ENCODE measurements at regions of chr20 and their contacts with region 1.

Region 1: GRCh38 chr20:43983359-43983758 is 68.7 kb downstream of the TOX2 start:
- DNase-seq: peak in 1 of 2 experiments; percentile 27
- ATAC-seq: peak in 1 of 2 experiments; percentile 33; a peak in 3 of 6 replicates
- H3K4me3 ChIP-seq: no peak overlapping the region
- H3K27ac ChIP-seq: peak overlapping the region in 1 of 2 experiments; percentile 63; a peak in 1 of 6 replicates
- H3K4me1 ChIP-seq: peaks cover 5% of the 10 kb centered on the region; the same call in 1 of the 3 replicates
- CTCF ChIP-seq: peak; percentile 30
- EP300 ChIP-seq: no peak
- POLR2A ChIP-seq: no peak
- RAD21 ChIP-seq: peak in 1 of 2 experiments; percentile 30; a peak in 2 of 5 replicates

Region 2: DNA sequence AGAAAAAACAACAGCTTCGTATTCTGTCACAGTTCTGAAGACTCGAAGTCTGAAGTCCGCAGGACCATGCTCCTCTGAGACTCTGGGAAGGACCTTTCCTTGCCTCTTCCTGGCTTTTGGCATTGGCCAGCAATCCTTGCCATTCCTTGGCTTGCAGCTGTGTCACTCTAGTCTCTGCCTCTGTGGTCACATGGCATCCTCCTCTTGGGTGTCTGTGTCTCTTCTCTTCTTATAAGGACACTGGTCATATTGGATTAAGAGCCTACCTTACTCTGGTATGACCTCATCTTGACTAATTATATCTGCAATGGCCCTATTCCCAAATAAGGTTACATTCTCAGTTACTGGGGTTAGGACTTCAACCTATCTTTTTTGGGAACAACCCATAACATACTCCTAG is 206.7 kb before region 1 on chr20:
- CTCF ChIA-PET with region 1: no interaction called
- POLR2A ChIA-PET with region 1: no interaction called
- DNase-seq: no peak
- ATAC-seq: no peak
- H3K4me3 ChIP-seq: no peak overlapping the region
- H3K27ac ChIP-seq: no peak overlapping the region
- H3K4me1 ChIP-seq: no peaks in the 10 kb centered on the region
- CTCF ChIP-seq: no peak
- EP300 ChIP-seq: no peak
- POLR2A ChIP-seq: no peak
- RAD21 ChIP-seq: no peak

Region 3: DNA sequence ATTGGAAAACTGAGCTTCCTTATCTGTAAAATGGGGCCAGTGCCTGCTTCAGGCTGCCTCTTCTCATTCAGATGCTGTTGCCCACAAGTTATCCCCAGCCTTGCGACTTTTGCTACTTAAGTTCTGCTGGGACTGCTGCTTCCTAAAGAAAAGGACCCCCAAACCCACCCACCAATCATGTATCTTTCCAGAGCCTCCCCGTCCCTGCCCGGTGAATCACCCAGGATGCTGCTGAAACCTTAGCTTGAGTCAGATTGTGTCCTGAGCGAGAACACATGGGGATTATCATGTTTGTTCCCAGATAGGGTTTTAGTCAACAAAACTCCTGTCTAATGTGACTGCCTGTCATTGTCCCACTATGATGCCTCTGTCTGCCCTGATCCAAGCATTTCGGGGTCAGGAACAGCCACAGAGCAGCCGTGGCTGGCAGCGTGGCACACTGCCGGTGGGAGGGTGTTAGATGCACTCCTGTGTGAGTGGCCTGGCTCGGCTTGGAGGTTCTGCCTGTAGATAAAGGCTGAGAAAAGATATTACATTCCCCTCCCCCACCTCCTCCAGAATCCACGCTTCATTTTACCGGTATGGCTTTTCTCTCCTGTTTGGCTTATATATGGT is 11.2 kb after region 1 on chr20:
- CTCF ChIA-PET with region 1: interaction called, 13 read pairs
- POLR2A ChIA-PET with region 1: no interaction called
- DNase-seq: no peak
- ATAC-seq: no peak
- H3K4me3 ChIP-seq: no peak overlapping the region
- H3K27ac ChIP-seq: no peak overlapping the region
- H3K4me1 ChIP-seq: no peaks in the 10 kb centered on the region
- CTCF ChIP-seq: no peak
- EP300 ChIP-seq: no peak
- POLR2A ChIP-seq: no peak
- RAD21 ChIP-seq: no peak

Region 4: GRCh38 chr20:44092551-44093248 is 109.3 kb after region 1 on chr20:
- CTCF ChIA-PET with region 1: no interaction called
- POLR2A ChIA-PET with region 1: no interaction called
- DNase-seq: peak in 1 of 2 experiments; percentile 60
- ATAC-seq: peak; percentile 66 to 80; a peak in 3 of 6 replicates
- H3K4me3 ChIP-seq: no peak overlapping the region
- H3K27ac ChIP-seq: no peak overlapping the region
- H3K4me1 ChIP-seq: peaks cover 4% of the 10 kb centered on the region; the same call in 2 of the 3 replicates
- CTCF ChIP-seq: peak; percentile 66
- EP300 ChIP-seq: no peak
- POLR2A ChIP-seq: no peak
- RAD21 ChIP-seq: peak; percentile 59 to 61

Measured in A549 (cell line).